CD4-positive, alpha-beta memory T cell (primary cell): ENCODE measurements at regions of chr2 and their contacts with region 1.

Region 1: GRCh38 chr2:64644177-64645004 is 9.3 kb downstream of the SERTAD2 start:
- DNase-seq: peak in 2 of 5 donors; percentile 35 to 38
- H3K4me3 ChIP-seq: no peak overlapping the region
- H3K4me3 Mint-ChIP-seq: peak overlapping the region; percentile 82 to 92 (median 86)
- H3K27ac ChIP-seq: no peak overlapping the region
- H3K27ac Mint-ChIP-seq: peak overlapping the region; percentile 7 to 87 (median 83)
- H3K4me1 ChIP-seq: peaks cover 52% of the 10 kb centered on the region
- H3K4me1 Mint-ChIP-seq: peaks cover 28 to 70% (median 43%) of the 10 kb centered on the region in 4 donors
- H3K27me3 ChIP-seq: no peaks in the 10 kb centered on the region
- H3K27me3 Mint-ChIP-seq: no peaks in the 10 kb centered on the region

Region 2: DNA sequence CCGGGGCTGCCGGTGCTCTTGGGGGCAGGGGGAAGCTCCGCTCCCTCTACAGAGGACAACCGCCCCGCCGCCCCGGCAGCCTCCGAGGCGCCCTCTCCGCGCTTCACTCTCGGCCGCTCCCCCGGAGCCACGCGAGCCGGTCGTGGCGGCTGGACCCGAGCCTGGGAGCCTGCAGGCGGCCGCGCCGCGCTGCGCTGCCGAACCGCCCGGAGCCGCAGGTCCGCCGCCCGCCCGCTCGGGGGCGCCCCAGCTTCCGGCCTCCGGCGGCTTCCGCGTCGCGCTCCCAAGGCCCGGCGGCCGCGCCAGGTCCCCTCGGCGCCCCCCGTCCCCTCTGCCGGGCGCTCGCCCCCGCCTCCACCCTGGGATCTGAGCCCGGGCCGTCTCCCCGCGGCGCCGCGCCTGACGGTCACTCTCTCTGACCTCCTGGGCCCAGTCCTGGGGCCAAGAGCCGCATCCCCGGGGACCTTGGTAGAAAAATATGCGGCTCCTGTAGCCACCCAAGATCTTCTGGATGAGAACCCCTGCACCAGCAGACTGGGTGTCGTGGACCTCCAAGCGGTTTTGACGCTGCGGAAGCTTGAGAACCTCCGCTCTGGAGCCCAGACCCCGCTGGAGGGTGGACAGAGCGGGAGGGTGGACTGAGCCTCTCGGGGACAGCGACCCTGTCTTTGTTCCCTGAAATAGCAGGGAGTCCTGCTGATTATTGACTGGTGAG is 35.0 kb before region 1 on chr2:
- CTCF ChIA-PET with region 1: interaction called, 54 read pairs
- POLR2A ChIA-PET with region 1: interaction called, 4 read pairs
- intact Hi-C with region 1: loop called (anchors 2 kb)
- DNase-seq: peak; percentile 58 to 79 (median 76)
- H3K4me3 ChIP-seq: peak overlapping the region in 1 of 2 donors; percentile 61
- H3K4me3 Mint-ChIP-seq: peak overlapping the region; percentile 64 to 79 (median 75)
- H3K27ac ChIP-seq: peak overlapping the region; percentile 57
- H3K27ac Mint-ChIP-seq: peak overlapping the region; percentile 35 to 83 (median 70)
- H3K4me1 ChIP-seq: peaks cover 38% of the 10 kb centered on the region
- H3K4me1 Mint-ChIP-seq: peaks cover 10 to 33% (median 22%) of the 10 kb centered on the region in 4 donors
- H3K27me3 ChIP-seq: no peaks in the 10 kb centered on the region
- H3K27me3 Mint-ChIP-seq: no peaks in the 10 kb centered on the region

Region 3: DNA sequence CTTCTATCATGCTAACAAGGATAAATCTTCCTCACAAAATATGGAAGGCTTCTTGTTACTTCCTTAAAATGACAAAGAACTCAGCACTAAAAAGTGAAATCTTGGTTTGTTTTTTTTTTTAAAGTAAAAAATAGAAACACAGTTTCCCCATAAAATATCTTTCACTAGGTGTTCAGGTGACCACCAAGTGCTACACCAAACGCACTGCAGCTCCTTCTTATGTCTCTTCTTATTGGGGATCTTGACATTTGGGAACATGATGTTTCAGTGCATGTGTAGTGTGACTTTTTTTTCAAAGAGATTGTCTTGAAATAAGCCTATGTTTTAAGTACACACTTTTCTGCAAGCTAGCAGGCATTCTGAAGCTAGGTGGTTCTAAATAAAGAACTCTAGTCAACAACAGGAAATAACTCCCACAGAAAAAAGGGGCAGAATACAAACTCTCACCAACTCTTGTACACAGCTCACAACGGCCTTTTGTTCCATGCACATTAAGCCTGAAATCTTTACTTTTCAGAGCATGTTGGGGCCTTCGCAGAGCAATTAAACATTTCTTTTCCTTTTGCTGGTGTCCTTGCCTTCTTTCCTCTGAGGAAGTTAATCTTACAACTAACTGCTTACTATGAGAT is 22.5 kb after region 1 on chr2:
- CTCF ChIA-PET with region 1: interaction called, 118 read pairs
- POLR2A ChIA-PET with region 1: no interaction called
- intact Hi-C with region 1: no loop called
- DNase-seq: peak in 3 of 5 donors; percentile 12 to 25 (median 18)
- H3K4me3 ChIP-seq: no peak overlapping the region
- H3K4me3 Mint-ChIP-seq: peak overlapping the region; percentile 1 to 68 (median 35)
- H3K27ac ChIP-seq: no peak overlapping the region
- H3K27ac Mint-ChIP-seq: peak overlapping the region; percentile 61 to 94 (median 67)
- H3K4me1 ChIP-seq: peaks cover 34% of the 10 kb centered on the region
- H3K4me1 Mint-ChIP-seq: peaks cover 15 to 34% (median 25%) of the 10 kb centered on the region in 4 donors
- H3K27me3 ChIP-seq: no peaks in the 10 kb centered on the region
- H3K27me3 Mint-ChIP-seq: no peaks in the 10 kb centered on the region

Region 4: GRCh38 chr2:64698668-64699444 is 54.5 kb after region 1 on chr2:
- CTCF ChIA-PET with region 1: interaction called, 10 read pairs
- POLR2A ChIA-PET with region 1: no interaction called
- intact Hi-C with region 1: loop called (anchors 1 kb)
- DNase-seq: no peak
- H3K4me3 ChIP-seq: no peak overlapping the region
- H3K4me3 Mint-ChIP-seq: peak overlapping the region in 5 of 8 donors; percentile 9 to 53 (median 22)
- H3K27ac ChIP-seq: no peak overlapping the region
- H3K27ac Mint-ChIP-seq: peak overlapping the region in 3 of 7 donors; percentile 2 to 34 (median 22)
- H3K4me1 ChIP-seq: peaks cover 36% of the 10 kb centered on the region
- H3K4me1 Mint-ChIP-seq: peaks cover 21 to 41% (median 30%) of the 10 kb centered on the region in 4 donors
- H3K27me3 ChIP-seq: no peaks in the 10 kb centered on the region
- H3K27me3 Mint-ChIP-seq: no peaks in the 10 kb centered on the region

Region 5: GRCh38 chr2:64767670-64768468 is 123.5 kb after region 1 on chr2:
- CTCF ChIA-PET with region 1: interaction called, 13 read pairs
- POLR2A ChIA-PET with region 1: interaction called, 9 read pairs
- intact Hi-C with region 1: loop called (anchors 1 kb)
- DNase-seq: peak; percentile 66 to 86 (median 69)
- H3K4me3 ChIP-seq: peak overlapping the region; percentile 47 to 72
- H3K4me3 Mint-ChIP-seq: peak overlapping the region; percentile 86 to 99 (median 94)
- H3K27ac ChIP-seq: peak overlapping the region; percentile 90
- H3K27ac Mint-ChIP-seq: peak overlapping the region; percentile 81 to 97 (median 96)
- H3K4me1 ChIP-seq: peaks cover 14% of the 10 kb centered on the region
- H3K4me1 Mint-ChIP-seq: peaks cover 12 to 23% (median 13%) of the 10 kb centered on the region in 4 donors
- H3K27me3 ChIP-seq: no peaks in the 10 kb centered on the region
- H3K27me3 Mint-ChIP-seq: no peaks in the 10 kb centered on the region

Region 6: DNA sequence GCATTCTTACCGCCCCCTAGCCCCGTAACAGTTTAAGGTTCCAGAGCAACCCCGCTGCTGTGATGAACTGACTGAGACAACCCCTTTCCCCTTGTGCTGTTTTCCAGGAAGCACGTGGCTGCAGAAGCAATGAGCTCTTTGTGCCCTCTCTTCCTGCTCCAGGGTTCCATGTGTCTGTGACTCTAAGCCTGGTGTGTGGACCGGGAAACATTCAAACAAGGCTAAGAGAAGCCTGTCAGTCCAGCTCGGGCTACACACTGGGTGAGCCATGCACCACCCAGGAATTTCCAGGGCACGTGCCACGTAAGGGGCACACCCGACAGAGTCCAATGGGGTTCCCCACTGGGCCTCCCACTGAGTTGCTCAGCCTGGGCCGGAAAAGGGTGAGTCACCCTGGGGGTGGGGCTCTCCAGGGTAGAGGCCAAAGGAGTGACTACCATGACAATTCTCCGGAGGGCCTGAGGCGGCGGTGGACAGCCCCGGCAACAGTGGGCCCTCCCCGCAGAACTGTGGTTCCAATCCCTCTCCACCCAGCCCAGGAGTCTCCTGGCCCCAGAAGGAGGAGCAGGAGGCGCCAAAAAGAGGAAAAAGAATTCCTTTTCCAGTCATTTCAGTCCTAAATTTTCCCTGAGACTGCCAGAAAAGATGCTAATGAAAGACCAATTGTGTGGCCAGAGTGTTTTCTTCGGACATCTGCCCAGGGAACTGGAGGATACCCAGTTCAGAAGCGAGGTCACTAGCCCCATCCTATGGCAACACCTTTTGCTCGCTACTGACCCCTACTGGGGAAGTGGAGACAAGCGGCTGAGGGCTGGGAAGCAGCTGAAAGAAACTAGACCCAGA is 187.0 kb after region 1 on chr2:
- CTCF ChIA-PET with region 1: interaction called, 98 read pairs
- POLR2A ChIA-PET with region 1: interaction called, 46 read pairs
- intact Hi-C with region 1: loop called (anchors 1 kb)
- DNase-seq: peak; percentile 74 to 90 (median 75)
- H3K4me3 ChIP-seq: peak overlapping the region; percentile 22 to 48
- H3K4me3 Mint-ChIP-seq: peak overlapping the region; percentile 19 to 78 (median 66)
- H3K27ac ChIP-seq: no peak overlapping the region
- H3K27ac Mint-ChIP-seq: peak overlapping the region in 5 of 7 donors; percentile 31 to 72 (median 45)
- H3K4me1 ChIP-seq: peaks cover 10% of the 10 kb centered on the region
- H3K4me1 Mint-ChIP-seq: peaks cover 2 to 12% (median 8%) of the 10 kb centered on the region in 4 donors
- H3K27me3 ChIP-seq: no peaks in the 10 kb centered on the region
- H3K27me3 Mint-ChIP-seq: peaks cover 2 to 3% of the 10 kb centered on the region in 2 donors

Region 7: GRCh38 chr2:64873472-64873924 is 229.1 kb after region 1 on chr2:
- CTCF ChIA-PET with region 1: interaction called, 22 read pairs
- POLR2A ChIA-PET with region 1: no interaction called
- intact Hi-C with region 1: no loop called
- DNase-seq: peak; percentile 64 to 76 (median 68)
- H3K4me3 ChIP-seq: peak overlapping the region in 1 of 2 donors; percentile 7
- H3K4me3 Mint-ChIP-seq: peak overlapping the region in 7 of 8 donors; percentile 0 to 70 (median 31)
- H3K27ac ChIP-seq: no peak overlapping the region
- H3K27ac Mint-ChIP-seq: peak overlapping the region in 3 of 7 donors; percentile 23 to 48 (median 26)
- H3K4me1 ChIP-seq: peaks cover 8% of the 10 kb centered on the region
- H3K4me1 Mint-ChIP-seq: peaks cover 6 to 7% (median 6%) of the 10 kb centered on the region in 4 donors
- H3K27me3 ChIP-seq: no peaks in the 10 kb centered on the region
- H3K27me3 Mint-ChIP-seq: peaks cover 1 to 3% of the 10 kb centered on the region in 2 donors

Region 8: DNA sequence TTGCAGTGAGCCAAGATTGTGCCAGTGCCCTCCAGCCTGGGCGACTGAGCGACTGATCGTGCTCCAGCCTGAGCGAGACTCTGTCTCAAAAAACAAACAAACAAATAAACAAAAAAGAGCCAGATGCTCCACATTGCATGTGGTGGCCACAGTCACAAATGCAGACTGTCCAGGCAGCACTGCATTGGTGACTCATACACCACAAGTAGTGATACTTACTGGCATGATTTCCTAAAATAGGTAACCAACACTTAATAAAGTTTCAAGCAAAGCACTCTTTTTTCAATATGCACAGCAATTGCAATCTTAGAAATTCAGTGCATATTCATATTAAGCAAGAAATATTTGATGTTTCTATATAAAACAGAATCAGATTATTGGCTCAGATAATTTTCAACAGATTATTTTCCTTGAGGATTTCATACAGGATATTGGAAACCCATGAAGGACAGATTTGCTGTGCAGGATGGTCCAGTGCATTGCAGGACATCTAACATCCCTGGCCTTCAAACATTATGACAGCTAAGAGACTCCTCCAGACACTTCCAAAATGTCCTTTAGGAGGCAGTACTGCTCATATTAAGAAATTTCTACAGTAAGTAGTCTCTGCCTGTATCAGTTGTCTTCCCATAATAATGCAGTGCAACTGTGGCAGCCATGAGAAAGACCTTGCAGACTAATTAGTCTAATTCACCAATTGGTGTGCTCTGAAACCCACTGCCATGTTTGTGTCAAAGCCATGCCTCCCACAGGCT is 334.3 kb after region 1 on chr2:
- CTCF ChIA-PET with region 1: no interaction called
- POLR2A ChIA-PET with region 1: no interaction called
- intact Hi-C with region 1: no loop called
- DNase-seq: peak in 4 of 5 donors; percentile 12 to 19 (median 17)
- H3K4me3 ChIP-seq: no peak overlapping the region
- H3K4me3 Mint-ChIP-seq: no peak overlapping the region
- H3K27ac ChIP-seq: no peak overlapping the region
- H3K27ac Mint-ChIP-seq: no peak overlapping the region
- H3K4me1 ChIP-seq: no peaks in the 10 kb centered on the region
- H3K4me1 Mint-ChIP-seq: no peaks in the 10 kb centered on the region
- H3K27me3 ChIP-seq: no peaks in the 10 kb centered on the region
- H3K27me3 Mint-ChIP-seq: no peaks in the 10 kb centered on the region